ENCODE measurements at regions of chr13 and their contacts with region 1.

Region 1: GRCh38 chr13:24512197-24512907 is at the start of gene PARP4:
- DNase-seq: peak; percentile 39 to 85 (median 57)
- ATAC-seq: peak; percentile 75
- H3K4me3 ChIP-seq: peak within 1 kb of the TSS; percentile 84
- H3K4me3 Mint-ChIP-seq: peak within 1 kb of the TSS; percentile 88
- H3K27ac ChIP-seq: peak within 1 kb of the TSS; percentile 72 to 76
- H3K27ac Mint-ChIP-seq: peak within 1 kb of the TSS; percentile 86
- H3K4me1 ChIP-seq: peaks cover 20% of the 10 kb centered on the region
- H3K4me1 Mint-ChIP-seq: peaks cover 32% of the 10 kb centered on the region
- H3K27me3 ChIP-seq: no peaks in the 10 kb centered on the region
- H3K27me3 Mint-ChIP-seq: no peaks in the 10 kb centered on the region
- CTCF ChIP-seq: no peak
- total RNA-seq, gene PARP4: 29.5 to 29.6 TPM

Region 2: DNA sequence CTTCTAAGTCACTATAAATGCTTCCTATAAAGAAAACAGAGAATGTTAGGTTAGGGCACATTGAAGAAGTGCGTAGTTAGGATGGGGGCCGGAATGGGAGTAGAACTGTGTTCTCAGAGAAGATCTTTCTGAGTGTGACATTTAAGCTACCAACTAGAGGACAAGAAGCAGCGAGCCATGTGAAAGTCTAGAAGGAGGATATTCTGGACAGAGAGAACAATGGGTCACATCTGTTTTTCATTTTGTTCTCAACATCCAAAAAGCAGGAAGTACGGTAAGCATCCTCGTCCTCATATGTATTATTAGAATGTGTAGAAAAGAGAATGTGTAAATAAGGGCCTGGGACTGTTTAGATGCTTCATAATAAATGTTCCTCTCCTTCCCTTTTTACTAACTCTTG is 44.7 kb after region 1 on chr13:
- CTCF ChIA-PET with region 1: no interaction called
- POLR2A ChIA-PET with region 1: no interaction called
- intact Hi-C with region 1: loop called in 1 of 2 experiments (anchors 5 kb)
- DNase-seq: no peak
- ATAC-seq: no peak
- H3K4me3 ChIP-seq: no peak overlapping the region
- H3K4me3 Mint-ChIP-seq: no peak overlapping the region
- H3K27ac ChIP-seq: no peak overlapping the region
- H3K27ac Mint-ChIP-seq: no peak overlapping the region
- H3K4me1 ChIP-seq: no peaks in the 10 kb centered on the region
- H3K4me1 Mint-ChIP-seq: peaks cover 8% of the 10 kb centered on the region
- H3K27me3 ChIP-seq: peaks cover 6 to 7% of the 10 kb centered on the region in 2 experiments
- H3K27me3 Mint-ChIP-seq: peaks cover 67% of the 10 kb centered on the region
- CTCF ChIP-seq: no peak

Region 3: GRCh38 chr13:25286969-25287961 is 774.9 kb after region 1 on chr13 and contains the start of gene MTMR6:
- CTCF ChIA-PET with region 1: no interaction called
- POLR2A ChIA-PET with region 1: no interaction called
- intact Hi-C with region 1: loop called in 1 of 2 experiments (anchors 10 kb)
- DNase-seq: peak; percentile 89 to 98 (median 93)
- ATAC-seq: peak; percentile 84
- H3K4me3 ChIP-seq: peak within 1 kb of the TSS; percentile 94
- H3K4me3 Mint-ChIP-seq: peak within 1 kb of the TSS; percentile 99
- H3K27ac ChIP-seq: peak within 1 kb of the TSS; percentile 97 to 99
- H3K27ac Mint-ChIP-seq: peak within 1 kb of the TSS; percentile 97
- H3K4me1 ChIP-seq: peaks cover 22% of the 10 kb centered on the region
- H3K4me1 Mint-ChIP-seq: peaks cover 40% of the 10 kb centered on the region
- H3K27me3 ChIP-seq: no peaks in the 10 kb centered on the region
- H3K27me3 Mint-ChIP-seq: peaks cover 4% of the 10 kb centered on the region
- CTCF ChIP-seq: peak; percentile 99
- total RNA-seq, gene MTMR6: 33.3 to 34.2 TPM